ENCODE measurements at regions of chr19 and their contacts with region 1.

Region 1: DNA sequence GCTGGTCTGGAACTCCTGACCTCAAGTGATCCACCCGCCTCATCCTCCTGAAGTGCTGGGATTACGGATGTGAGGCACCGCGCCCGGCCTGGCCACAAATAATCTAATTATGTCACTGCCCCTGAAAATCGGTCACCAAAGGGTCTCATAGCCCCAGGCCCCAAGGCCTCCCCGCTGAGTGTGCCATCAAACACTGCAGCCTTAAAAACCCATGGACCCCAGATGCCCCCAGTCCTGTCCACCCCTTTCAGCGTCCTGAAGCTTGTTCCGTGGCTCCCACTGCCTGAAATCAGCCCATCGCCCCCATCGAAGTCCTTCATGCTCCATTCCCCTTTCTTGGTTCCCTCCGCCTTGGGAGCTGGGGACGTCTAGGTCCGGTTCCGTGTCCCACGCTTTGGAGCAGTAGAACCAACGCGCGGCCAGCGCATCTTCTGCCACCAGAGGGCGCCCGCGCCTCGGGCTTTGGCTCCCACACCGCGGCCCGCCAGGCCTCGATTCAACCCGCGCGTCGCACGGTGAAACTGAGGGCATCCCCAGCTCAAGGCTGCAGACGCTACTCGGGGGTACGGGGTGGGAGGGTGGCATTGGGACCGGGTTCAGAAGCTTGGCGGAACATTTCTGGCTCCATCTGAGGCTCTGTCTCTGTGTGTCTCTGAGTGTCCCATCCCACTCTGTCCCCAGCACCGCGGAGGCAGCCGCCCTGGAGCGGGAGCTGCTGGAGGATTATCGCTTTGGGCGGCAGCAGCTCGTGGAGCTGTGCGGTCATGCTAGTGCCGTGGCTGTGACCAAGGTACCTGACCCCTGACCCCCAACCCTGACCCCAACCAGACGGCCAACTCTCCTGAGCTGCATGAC is 3.5 kb downstream of the YJEFN3 start:
- DNase-seq: peak; percentile 78 to 85 (median 80)
- H3K4me3 ChIP-seq: no peak overlapping the region
- H3K4me3 Mint-ChIP-seq: peak overlapping the region in 1 of 8 donors; percentile 20
- H3K27ac ChIP-seq: peak overlapping the region; percentile 24
- H3K27ac Mint-ChIP-seq: peak overlapping the region in 6 of 7 donors; percentile 64 to 91 (median 86)
- H3K4me1 ChIP-seq: peaks cover 12% of the 10 kb centered on the region
- H3K4me1 Mint-ChIP-seq: peaks cover 3 to 28% (median 13%) of the 10 kb centered on the region in 4 donors
- H3K27me3 ChIP-seq: no peaks in the 10 kb centered on the region
- H3K27me3 Mint-ChIP-seq: no peaks in the 10 kb centered on the region

Region 2: DNA sequence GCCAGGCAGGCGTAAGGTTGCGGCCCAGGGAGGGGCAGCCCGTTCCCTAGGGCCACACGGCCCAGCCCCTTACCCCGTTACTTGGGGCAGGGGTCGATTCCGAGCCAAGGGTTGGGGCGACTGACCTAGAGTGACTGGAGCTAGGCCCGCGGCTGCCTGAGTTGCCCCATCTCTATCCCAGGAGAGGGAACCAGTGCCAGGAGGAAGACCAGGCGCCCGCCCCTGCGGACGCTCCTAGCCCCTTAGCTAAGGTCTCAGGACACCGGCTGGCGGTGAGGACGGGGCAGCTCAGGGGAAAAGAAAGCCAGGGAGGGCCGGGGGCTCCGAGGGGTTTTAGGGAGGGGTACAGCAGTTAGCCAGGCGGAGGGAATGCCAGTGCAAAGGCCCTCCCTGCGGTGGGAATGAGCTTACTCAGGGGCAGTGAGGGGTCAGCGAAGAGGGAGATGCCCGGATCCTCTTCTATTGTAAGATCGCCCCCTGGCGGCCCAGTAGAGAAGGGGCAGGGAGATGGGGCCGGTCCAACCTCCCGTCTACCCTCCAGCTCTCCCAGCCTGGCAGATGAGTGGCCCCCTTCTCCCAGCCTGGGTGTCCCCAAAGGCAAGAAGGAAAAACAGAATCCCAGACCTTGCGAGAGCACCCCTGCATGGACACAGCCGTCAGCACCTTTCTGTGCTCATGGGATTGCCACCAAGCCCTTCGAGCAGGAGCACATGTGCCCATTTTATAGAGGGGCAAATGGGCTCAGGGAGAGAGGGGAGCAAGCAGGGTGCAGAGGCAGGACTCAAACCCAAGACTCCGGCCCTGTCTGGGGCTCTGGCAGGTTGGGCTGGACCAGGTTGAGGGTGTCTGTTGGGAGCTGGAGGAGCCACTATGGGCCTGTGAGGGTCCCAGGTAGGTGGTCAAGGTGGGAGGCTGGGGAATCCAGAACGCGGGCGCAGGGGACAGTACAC is 22.2 kb after region 1 on chr19:
- CTCF ChIA-PET with region 1: interaction called, 25 read pairs
- POLR2A ChIA-PET with region 1: interaction called, 7 read pairs
- intact Hi-C with region 1: loop called (anchors 1 kb)
- DNase-seq: peak; percentile 42 to 50 (median 45)
- H3K4me3 ChIP-seq: no peak overlapping the region
- H3K4me3 Mint-ChIP-seq: peak overlapping the region in 1 of 8 donors; percentile 10
- H3K27ac ChIP-seq: no peak overlapping the region
- H3K27ac Mint-ChIP-seq: peak overlapping the region in 1 of 7 donors; percentile 40
- H3K4me1 ChIP-seq: peaks cover 6% of the 10 kb centered on the region
- H3K4me1 Mint-ChIP-seq: peaks cover 10 to 17% (median 12%) of the 10 kb centered on the region in 4 donors
- H3K27me3 ChIP-seq: no peaks in the 10 kb centered on the region
- H3K27me3 Mint-ChIP-seq: no peaks in the 10 kb centered on the region

Region 3: DNA sequence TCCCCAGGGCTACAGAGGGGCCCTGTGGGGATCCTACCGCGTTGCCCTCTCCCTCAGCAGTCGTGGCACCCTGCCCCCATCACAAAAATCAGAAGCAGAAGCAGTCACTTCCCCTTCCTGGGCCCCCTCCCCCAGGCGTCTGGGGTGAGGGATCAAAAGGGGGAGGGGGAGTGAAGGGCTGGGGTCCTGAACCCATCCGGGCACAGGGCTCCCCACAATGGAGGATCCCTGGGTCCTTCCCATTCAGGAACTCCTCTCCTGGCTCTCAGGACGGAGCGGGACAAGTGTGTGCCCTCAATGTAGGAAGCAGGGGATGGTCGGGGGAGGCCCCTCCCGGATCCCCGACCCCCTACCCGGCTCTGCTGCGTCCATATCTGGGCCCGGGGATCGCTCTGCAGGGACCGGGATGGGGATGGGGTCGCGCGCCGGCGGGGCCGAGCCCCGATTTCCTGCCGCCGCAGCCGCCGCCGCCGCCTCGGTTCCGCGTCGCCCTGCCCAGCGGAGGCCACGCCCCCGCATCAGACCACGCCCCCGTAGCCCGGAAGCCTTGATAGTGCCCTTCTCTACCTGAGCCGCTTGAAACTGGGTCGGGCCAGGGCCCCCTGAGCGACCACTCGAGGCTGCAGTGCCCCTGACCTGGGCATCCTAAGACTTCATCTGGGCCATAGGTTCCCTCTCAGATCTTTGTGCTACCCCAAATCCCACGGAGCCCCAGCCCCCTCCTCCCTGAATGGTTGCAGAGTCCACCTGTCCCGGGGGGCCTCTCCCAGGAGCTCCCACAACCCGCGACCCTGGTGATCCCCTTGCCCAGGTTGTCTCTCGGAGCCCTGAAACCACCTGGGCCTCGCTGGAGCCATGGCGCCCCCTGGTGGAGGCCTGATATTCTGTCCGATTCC is 111.2 kb after region 1 on chr19 and contains the start of gene GMIP:
- CTCF ChIA-PET with region 1: interaction called, 68 read pairs
- POLR2A ChIA-PET with region 1: interaction called, 42 read pairs
- intact Hi-C with region 1: loop called (anchors 1 kb)
- DNase-seq: peak; percentile 86 to 89 (median 88)
- H3K4me3 ChIP-seq: peak within 1 kb of the TSS; percentile 96 to 97
- H3K4me3 Mint-ChIP-seq: peak within 1 kb of the TSS; percentile 90 to 99 (median 99)
- H3K27ac ChIP-seq: peak within 1 kb of the TSS; percentile 92
- H3K27ac Mint-ChIP-seq: peak within 1 kb of the TSS; percentile 96 to 99 (median 97)
- H3K4me1 ChIP-seq: peaks cover 22% of the 10 kb centered on the region
- H3K4me1 Mint-ChIP-seq: peaks cover 9 to 25% (median 15%) of the 10 kb centered on the region in 4 donors
- H3K27me3 ChIP-seq: no peaks in the 10 kb centered on the region
- H3K27me3 Mint-ChIP-seq: no peaks in the 10 kb centered on the region
- total RNA-seq, gene GMIP: 101 to 105 TPM

Region 4: DNA sequence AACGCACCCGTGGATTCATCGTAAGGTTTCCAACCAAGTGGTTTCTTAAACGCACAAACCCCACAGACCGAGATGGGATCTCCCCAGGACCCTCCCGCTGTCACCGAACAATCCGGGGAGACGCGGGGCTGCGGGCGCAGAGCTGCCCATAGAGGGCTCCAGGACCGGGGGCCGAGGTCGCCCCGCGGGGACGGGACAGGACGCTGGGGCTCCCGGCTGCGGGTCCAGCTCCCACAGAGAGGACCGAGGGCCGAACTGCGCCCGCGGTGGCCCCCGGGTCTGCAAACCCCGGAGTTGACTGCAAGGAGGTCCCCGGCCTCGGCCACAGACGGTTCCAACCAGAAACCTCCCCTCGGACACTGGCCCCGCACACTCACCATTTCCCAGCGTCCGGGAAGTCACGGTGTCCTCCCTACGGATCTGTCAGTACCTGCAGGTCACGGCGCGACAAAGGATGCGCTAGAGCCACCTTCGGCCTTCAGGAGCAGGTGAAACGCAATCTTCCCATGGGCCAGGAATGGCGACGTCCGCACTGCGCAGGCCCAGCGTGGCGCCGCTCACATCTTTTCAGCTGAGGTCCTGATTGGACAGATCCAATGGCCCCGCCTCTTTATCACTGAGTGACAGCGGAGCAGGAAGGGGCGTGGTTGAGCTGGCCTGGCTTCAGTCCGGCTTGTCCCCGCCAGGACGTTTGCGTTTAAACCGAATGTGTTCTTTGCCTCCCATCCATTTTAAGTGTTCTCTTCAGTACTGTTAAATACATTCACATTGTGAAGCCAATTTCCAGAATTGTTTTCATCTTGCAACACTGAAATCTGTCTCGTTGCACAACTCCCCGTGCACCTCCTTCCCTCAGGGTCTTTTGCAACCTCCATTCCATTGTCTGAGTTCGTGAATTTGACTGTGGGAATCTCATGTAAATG is 200.7 kb after region 1 on chr19 and contains the start of gene ZNF14:
- CTCF ChIA-PET with region 1: interaction called, 3 read pairs
- POLR2A ChIA-PET with region 1: interaction called, 3 read pairs
- intact Hi-C with region 1: loop called (anchors 5 kb)
- DNase-seq: peak; percentile 87 to 94 (median 88)
- H3K4me3 ChIP-seq: peak within 1 kb of the TSS; percentile 59 to 81
- H3K4me3 Mint-ChIP-seq: peak within 1 kb of the TSS; percentile 95 to 100 (median 98)
- H3K27ac ChIP-seq: peak within 1 kb of the TSS; percentile 72
- H3K27ac Mint-ChIP-seq: peak within 1 kb of the TSS; percentile 93 to 99 (median 98)
- H3K4me1 ChIP-seq: peaks cover 18% of the 10 kb centered on the region
- H3K4me1 Mint-ChIP-seq: peaks cover 11 to 40% (median 24%) of the 10 kb centered on the region in 4 donors
- H3K27me3 ChIP-seq: no peaks in the 10 kb centered on the region
- H3K27me3 Mint-ChIP-seq: no peaks in the 10 kb centered on the region
- total RNA-seq, gene ZNF14: 31.2 to 32.2 TPM

Measured in CD4-positive, alpha-beta memory T cell (primary cell).